Activated B cell treated with CpG ODN at 0.5 μM for 24 hours (primary cell): ENCODE measurements at regions of chr12 and their contacts with region 1.

Region 1: DNA sequence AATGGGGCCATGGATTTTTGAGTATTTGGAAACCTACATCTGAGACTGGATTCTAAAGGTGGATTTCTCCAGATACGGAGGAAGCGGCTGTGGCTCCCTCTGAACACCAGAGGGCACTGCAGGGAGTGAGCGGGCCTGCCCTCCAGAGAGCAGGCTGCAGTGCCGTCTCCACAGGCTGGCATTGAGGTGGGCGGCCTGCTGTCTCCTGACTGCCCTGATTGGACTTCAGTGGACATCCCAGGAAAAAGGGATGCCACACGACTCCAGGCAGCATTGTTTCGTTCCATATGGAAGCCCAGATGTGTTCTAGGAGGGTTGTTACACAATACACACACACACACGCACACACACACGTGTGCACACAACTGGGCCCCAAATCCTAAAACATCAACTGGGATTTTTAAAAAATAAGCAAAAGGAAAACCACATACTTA is 20.9 kb upstream of the ANO2 start:
- DNase-seq: no peak
- ATAC-seq: no peak
- H3K4me3 Mint-ChIP-seq: no peak overlapping the region
- H3K27ac Mint-ChIP-seq: no peak overlapping the region
- H3K4me1 Mint-ChIP-seq: no peaks in the 10 kb centered on the region
- H3K27me3 Mint-ChIP-seq: peaks cover 21% of the 10 kb centered on the region
- CTCF ChIP-seq: peak; percentile 37

Region 2: GRCh38 chr12:6207259-6207925 is 241.4 kb after region 1 on chr12:
- CTCF ChIA-PET with region 1: no interaction called
- POLR2A ChIA-PET with region 1: interaction called, 15 read pairs
- intact Hi-C with region 1: no loop called
- DNase-seq: no peak
- ATAC-seq: no peak
- H3K4me3 Mint-ChIP-seq: no peak overlapping the region
- H3K27ac Mint-ChIP-seq: no peak overlapping the region
- H3K4me1 Mint-ChIP-seq: peaks cover 25% of the 10 kb centered on the region
- H3K27me3 Mint-ChIP-seq: peaks cover 13% of the 10 kb centered on the region
- CTCF ChIP-seq: no peak